ENCODE measurements at regions of chr1 and their contacts with region 1.

Region 1: GRCh38 chr1:145891587-145892485 is 6.2 kb upstream of the ANKRD35 start:
- DNase-seq: peak; percentile 76
- CTCF ChIP-seq: peak; percentile 85

Region 2: GRCh38 chr1:145690624-145691035 is 201.2 kb before region 1 on chr1:
- CTCF ChIA-PET with region 1: no interaction called
- POLR2A ChIA-PET with region 1: no interaction called
- DNase-seq: peak; percentile 62
- CTCF ChIP-seq: no peak

Region 3: DNA sequence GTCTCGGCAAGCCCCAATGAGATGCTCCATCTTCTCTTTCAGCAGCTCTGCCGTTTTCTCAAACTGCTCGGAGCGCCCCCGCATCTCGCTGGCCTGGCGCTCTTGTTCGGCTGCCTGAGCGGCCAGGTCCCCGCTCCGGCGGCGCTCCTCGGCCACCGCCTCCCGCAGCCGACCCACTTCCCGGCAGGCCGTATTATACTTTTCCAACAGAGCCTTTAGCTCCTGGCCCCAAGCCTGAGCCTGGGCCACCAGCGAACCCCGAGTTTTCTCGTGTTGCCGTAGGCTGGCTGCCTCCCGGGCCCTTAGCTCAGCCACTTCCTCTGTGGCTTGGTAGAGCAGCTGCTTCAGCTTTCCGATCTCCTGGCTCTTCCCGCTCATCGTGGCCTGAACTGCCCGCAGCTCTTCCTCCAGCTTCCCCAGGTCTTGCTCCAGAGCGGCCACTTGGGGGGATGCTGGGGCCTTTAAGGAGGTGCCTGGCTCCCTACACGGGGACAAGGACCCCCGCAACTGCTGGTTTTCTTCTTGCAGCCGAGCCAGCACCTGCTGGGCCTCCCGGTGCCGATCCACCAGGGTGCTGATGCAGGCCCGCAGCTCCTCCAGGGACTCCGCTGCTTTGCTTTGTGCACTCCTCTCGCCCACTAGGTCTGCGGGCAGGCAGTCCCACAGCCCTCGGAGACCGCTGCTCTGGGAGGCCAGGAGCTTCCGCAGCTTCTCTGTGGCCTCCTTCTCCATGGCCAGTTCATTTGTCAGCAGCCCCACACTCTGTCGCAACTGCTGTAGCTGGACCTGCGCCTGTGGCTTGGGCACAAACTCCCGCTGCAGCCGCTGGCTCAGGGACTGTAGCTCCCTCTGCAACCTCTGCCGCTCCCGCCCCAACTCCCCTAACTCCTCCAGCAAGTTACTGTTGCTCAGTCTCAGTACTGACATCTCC is 19.6 kb before region 1 on chr1:
- CTCF ChIA-PET with region 1: interaction called, 15 read pairs
- POLR2A ChIA-PET with region 1: no interaction called
- DNase-seq: peak; percentile 65
- CTCF ChIP-seq: no peak

Region 4: GRCh38 chr1:145906954-145907753 is 15.3 kb after region 1 on chr1:
- CTCF ChIA-PET with region 1: interaction called, 70 read pairs
- POLR2A ChIA-PET with region 1: no interaction called
- DNase-seq: no peak
- CTCF ChIP-seq: no peak

Region 5: GRCh38 chr1:145963995-145964901 is 72.4 kb after region 1 on chr1 and contains the starts of genes ANKRD34A and POLR3GL:
- CTCF ChIA-PET with region 1: interaction called, 14 read pairs
- POLR2A ChIA-PET with region 1: no interaction called
- DNase-seq: peak; percentile 91
- CTCF ChIP-seq: no peak

Region 6: GRCh38 chr1:146007506-146008133 is 115.8 kb after region 1 on chr1:
- CTCF ChIA-PET with region 1: interaction called, 36 read pairs
- POLR2A ChIA-PET with region 1: no interaction called
- DNase-seq: no peak
- CTCF ChIP-seq: no peak

Region 7: DNA sequence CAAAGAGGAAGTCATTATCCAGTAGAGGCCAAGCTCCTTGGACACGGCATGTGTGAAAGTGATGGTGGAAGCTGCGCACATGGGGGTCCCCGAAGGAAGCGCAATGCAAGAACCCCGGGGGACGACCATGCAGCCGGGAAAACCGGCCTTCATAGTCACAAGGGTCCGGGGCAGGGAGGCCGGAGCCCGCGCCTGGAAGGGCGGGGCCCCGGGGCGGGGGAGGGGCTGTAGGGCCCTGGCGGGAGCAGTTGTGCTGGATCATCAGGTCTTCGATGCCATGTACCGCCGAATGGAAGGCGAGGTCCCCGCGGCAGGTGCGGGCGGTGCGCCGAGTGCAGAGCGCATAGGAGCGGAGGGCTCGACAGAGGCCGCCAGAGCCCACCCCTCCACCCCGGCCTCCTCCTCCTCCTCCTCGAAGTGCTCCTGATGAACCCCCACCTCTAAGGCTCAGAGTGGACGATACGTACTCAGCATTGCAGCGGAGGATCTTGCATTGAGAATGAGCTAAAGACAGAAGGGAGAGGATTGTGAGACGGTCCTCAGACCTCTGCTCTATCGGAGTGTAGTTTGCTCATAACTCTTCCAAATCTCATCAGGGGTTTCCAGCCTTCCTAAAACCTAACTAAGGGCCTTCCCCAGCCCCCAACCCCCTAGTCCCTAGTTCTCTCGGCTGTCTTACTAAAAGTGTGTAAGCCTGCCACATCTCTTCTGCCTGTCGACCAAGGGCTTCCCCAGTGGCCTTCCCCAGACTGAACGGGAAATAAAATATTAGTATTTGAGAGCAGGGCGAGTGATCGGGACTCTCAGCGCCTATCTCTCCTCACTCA is 127.6 kb after region 1 on chr1:
- CTCF ChIA-PET with region 1: interaction called, 14 read pairs
- POLR2A ChIA-PET with region 1: no interaction called
- DNase-seq: no peak
- CTCF ChIP-seq: no peak